Activated naive CD4-positive, alpha-beta T cell treated with anti-CD3 and anti-CD28 coated beads, Interleukin-2, amount 10 ng/mL, durations not matched to agents 7 days and 5 days (primary cell): ENCODE measurements at regions of chr19 and their contacts with region 1.

Region 1: DNA sequence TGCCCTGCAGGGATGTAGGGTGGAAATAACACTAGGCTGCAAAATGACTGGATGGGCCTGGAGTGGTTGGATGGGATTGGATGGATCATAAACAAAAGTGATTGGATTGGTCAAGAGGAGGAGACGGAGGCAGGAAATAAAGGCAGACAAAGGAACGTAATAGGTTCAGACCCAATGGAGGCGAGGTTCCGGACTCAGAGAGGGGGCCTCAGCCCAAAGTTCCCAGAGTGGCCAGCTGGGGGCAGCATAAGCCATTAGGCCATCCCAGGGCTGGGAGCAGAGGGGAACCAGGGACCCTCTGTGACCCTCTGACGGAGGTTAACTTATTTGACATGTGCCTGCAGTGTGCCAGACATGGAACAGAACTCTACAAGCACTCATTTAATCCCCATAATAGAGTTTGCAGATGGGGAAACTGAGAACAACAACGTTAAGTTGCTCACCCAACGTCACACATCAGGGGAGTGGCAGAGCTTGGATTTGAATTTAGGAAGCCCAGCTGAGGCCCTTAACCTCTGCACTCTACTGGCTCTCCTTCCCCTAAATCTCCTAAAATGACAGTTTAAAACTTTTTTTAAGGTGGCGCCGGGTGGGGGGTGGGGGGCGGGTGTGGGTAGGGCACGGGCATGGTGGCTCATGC is 15.3 kb upstream of the MAP1S start:
- DNase-seq: peak; percentile 81
- H3K4me3 Mint-ChIP-seq: no peak overlapping the region
- H3K27ac Mint-ChIP-seq: no peak overlapping the region
- H3K4me1 Mint-ChIP-seq: no peaks in the 10 kb centered on the region
- H3K27me3 Mint-ChIP-seq: peaks cover 13% of the 10 kb centered on the region

Region 2: DNA sequence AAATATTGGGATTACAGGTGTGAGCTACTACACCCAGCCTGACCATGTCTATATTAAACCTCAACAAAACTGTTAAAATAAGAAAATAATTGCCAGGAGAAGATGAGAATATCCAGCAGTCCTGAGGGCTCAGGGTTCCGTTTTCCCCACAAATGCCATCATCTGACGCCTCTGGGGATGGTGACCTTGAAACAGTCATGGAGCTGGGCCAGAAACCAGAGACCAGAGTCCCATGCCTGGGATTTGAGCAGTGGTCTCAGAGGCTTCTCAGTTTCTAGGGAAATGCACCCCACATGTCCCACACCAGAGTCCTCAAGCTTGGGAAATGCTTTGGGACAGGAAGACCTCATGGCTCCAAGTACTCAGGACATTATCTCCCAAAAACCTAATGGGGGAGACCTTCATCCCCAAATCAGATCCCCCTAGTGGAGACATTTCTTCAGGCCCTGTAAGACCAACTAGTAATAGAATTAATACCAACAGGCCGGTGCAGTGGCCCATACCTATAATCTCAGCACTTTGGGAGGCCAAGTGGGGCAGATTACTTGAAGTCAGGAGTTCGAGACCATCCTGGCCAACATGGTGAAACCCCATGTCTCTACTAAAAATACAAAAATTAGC is 12.5 kb after region 1 on chr19:
- CTCF ChIA-PET with region 1: interaction called, 12 read pairs
- DNase-seq: no peak
- H3K4me3 Mint-ChIP-seq: no peak overlapping the region
- H3K27ac Mint-ChIP-seq: no peak overlapping the region
- H3K4me1 Mint-ChIP-seq: peaks cover 34% of the 10 kb centered on the region
- H3K27me3 Mint-ChIP-seq: peaks cover 11% of the 10 kb centered on the region

Region 3: GRCh38 chr19:17775245-17775916 is 71.4 kb after region 1 on chr19:
- CTCF ChIA-PET with region 1: interaction called, 21 read pairs
- DNase-seq: peak; percentile 54
- H3K4me3 Mint-ChIP-seq: no peak overlapping the region
- H3K27ac Mint-ChIP-seq: no peak overlapping the region
- H3K4me1 Mint-ChIP-seq: peaks cover 5% of the 10 kb centered on the region
- H3K27me3 Mint-ChIP-seq: no peaks in the 10 kb centered on the region